AG04450 (cell line): ENCODE measurements at regions of chr7 and their contacts with region 1.

Region 1: GRCh38 chr7:129225206-129225930 is 538 bp downstream of the AHCYL2 start:
- DNase-seq: no peak
- H3K4me3 ChIP-seq: peak overlapping the region; percentile 77
- H3K27ac ChIP-seq: peak overlapping the region; percentile 31
- H3K27me3 ChIP-seq: no peaks in the 10 kb centered on the region
- CTCF ChIP-seq: no peak

Region 2: GRCh38 chr7:128974241-128974934 is 251.0 kb before region 1 on chr7:
- CTCF ChIA-PET with region 1: interaction called, 10 read pairs
- POLR2A ChIA-PET with region 1: no interaction called
- DNase-seq: no peak
- H3K4me3 ChIP-seq: no peak overlapping the region
- H3K27ac ChIP-seq: no peak overlapping the region
- H3K27me3 ChIP-seq: no peaks in the 10 kb centered on the region
- CTCF ChIP-seq: no peak

Region 3: GRCh38 chr7:129258649-129259389 is 33.5 kb after region 1 on chr7:
- CTCF ChIA-PET with region 1: no interaction called
- POLR2A ChIA-PET with region 1: no interaction called
- DNase-seq: no peak
- H3K4me3 ChIP-seq: no peak overlapping the region
- H3K27ac ChIP-seq: no peak overlapping the region
- H3K27me3 ChIP-seq: no peaks in the 10 kb centered on the region
- CTCF ChIP-seq: no peak

Region 4: DNA sequence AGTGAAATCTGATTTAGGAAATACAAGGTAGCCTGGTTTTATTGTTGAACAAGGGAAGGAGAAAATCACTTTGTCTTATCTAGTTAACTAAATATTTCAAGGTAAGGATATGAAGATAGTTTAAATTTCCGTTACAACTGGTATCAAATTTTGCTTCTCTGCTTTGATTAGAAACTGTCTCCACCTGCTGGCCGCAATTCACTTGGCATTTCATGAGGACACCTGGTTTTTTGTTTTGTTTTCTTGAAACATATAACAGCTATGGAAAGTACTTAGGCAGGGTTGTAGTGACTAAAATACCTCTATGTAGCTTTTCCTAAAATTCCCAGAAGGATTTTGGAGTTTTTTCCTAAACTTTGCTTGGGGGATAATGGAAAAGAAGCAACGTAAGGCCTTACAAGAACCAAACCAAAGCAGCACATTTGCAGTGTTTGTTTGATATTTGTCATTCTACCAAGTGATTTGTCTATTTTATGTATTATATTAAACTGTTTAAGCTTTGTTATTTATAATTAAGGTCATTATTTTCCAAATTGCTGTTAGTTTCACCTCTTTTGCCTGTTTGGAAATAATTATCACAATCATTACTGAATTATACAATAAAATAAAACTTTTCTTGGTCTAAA is 73.0 kb after region 1 on chr7:
- CTCF ChIA-PET with region 1: interaction called, 126 read pairs
- POLR2A ChIA-PET with region 1: no interaction called
- DNase-seq: no peak
- H3K4me3 ChIP-seq: no peak overlapping the region
- H3K27ac ChIP-seq: no peak overlapping the region
- H3K27me3 ChIP-seq: no peaks in the 10 kb centered on the region
- CTCF ChIP-seq: peak; percentile 82